Activated T-helper 1 cell treated with anti-CD3 and anti-CD28 coated beads, Interleukin-12 subunit alpha, Interleukin-12 subunit beta, Interleukin-2, Interleukin-4 antibody, amounts not matched to agents 30 ng/mL and 10 ng/mL and 1 ng/mL, durations not matched to agents 14 hours and 24 hours and 36 hours (primary cell): ENCODE measurements at regions of chr21 and their contacts with region 1.

Region 1: GRCh38 chr21:34553151-34553952 is 41.3 kb upstream of the KCNE1 start:
- DNase-seq: no peak
- H3K4me3 Mint-ChIP-seq: no peak overlapping the region
- H3K27ac Mint-ChIP-seq: no peak overlapping the region
- H3K4me1 Mint-ChIP-seq: no peaks in the 10 kb centered on the region
- H3K27me3 Mint-ChIP-seq: peaks cover 1% of the 10 kb centered on the region

Region 2: DNA sequence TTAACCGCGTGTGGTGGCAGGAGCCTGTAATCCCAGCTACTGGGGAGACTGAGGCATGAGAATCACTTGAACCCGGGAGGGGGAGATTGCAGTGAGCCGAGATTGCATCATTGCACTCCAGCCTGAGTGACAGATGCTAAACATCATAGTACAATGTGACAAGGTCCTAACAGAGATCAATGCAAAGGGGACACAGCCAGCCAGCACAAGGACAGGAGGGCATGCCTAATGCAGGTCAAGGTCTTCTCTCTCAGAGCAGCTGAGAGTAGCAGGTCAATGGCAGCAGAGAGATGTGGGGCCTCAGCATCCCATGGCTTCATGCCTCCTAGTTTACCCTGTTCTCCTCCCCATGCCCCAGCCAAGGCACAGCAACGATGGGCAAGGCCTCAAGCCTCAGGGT is 181.0 kb before region 1 on chr21:
- intact Hi-C with region 1: no loop called
- DNase-seq: no peak
- H3K4me3 Mint-ChIP-seq: no peak overlapping the region
- H3K27ac Mint-ChIP-seq: no peak overlapping the region
- H3K4me1 Mint-ChIP-seq: no peaks in the 10 kb centered on the region
- H3K27me3 Mint-ChIP-seq: peaks cover 5% of the 10 kb centered on the region

Region 3: DNA sequence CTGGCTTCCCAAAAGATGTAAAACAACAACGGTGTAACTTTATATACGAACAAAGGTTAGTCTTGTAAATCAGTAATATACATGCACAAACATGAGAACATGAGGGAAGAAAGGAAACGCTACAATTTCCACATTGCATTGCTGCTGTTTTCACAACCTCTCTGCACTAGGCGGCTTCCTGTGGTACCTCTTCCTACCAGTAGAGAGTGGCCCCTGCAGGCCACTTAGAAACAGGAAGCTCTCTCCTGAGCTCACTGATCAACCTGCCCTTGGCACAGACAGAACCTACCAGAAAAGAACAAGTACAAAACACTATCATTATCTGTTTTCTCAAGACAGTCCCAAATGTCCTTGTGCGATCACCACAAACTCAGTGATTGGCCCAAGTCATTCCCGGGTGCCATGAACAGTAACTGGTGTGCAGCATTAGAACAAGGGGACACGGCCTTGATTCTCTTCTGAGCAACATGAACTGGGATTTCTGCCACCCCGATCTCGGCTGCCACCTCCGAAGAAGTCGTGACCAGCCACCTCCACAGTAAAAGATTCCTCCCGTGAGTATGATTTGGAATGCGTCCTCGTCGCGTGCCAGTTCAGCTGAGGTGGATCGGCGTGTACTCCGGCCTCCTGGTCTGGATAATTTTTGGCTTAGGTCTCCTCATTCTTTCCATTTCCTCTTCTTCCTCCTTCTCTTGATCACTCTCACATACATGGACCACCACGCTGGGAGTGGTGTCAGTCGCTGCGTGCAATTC is 35.7 kb before region 1 on chr21:
- intact Hi-C with region 1: loop called (anchors 2 kb)
- DNase-seq: peak; percentile 7
- H3K4me3 Mint-ChIP-seq: no peak overlapping the region
- H3K27ac Mint-ChIP-seq: peak overlapping the region; percentile 50
- H3K4me1 Mint-ChIP-seq: peaks cover 25% of the 10 kb centered on the region
- H3K27me3 Mint-ChIP-seq: peaks cover 2% of the 10 kb centered on the region

Region 4: GRCh38 chr21:35172231-35172630 is 618.9 kb after region 1 on chr21:
- intact Hi-C with region 1: no loop called
- DNase-seq: no peak
- H3K4me3 Mint-ChIP-seq: peak overlapping the region; percentile 1
- H3K27ac Mint-ChIP-seq: peak overlapping the region; percentile 40
- H3K4me1 Mint-ChIP-seq: peaks cover 37% of the 10 kb centered on the region
- H3K27me3 Mint-ChIP-seq: peaks cover 2% of the 10 kb centered on the region